ENCODE measurements at regions of chr20 and their contacts with region 1.

Region 1: DNA sequence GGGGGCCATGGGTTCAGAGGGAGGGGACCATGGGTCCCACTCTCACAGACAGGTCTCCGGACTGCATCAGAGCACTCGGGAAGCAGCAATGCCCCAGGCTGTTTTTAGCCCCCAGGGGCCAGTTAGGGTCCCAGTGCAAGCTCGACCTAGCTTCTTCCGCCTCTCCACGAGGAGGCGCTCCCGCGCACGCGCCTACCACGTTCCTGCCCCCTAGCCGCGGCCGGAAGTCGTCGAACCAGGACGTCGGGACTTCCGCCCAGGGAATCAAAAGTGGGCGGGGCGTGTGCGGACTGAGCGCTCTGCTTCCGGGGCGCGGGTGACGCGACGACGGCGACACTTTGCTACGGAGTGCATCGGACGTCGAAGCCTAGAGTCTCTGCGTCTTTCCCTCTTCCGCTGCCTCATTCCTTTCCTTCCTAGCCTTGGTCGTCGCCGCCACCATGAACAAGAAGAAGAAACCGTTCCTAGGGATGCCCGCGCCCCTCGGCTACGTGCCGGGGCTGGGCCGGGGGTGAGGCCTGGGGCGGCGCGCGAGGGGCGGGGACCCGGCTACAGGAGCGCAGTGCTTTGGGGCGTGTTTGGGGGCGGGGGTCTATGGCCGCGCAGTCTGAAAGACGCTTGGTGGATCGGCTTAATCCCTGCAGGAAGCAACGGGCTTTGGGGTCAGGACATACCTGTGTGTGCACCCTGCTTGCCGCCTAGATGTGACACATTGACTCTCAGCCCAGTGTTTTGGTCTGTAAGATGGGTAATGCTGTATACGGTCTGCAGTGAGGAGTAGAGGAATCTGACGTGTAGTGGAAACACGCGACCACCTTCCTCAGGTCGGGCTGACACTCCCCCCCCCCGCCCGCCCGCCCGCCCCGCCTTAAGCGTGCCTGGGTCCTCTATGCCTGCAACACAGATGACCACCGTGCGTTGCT is at the start of gene PRPF6:
- DNase-seq: peak; percentile 98
- ATAC-seq: peak; percentile 47
- H3K4me3 Mint-ChIP-seq: peak within 1 kb of the TSS; percentile 97
- H3K27ac Mint-ChIP-seq: peak within 1 kb of the TSS; percentile 98
- H3K4me1 Mint-ChIP-seq: peaks cover 59% of the 10 kb centered on the region
- H3K27me3 Mint-ChIP-seq: no peaks in the 10 kb centered on the region
- total RNA-seq, gene PRPF6: 60.5 to 67.0 TPM

Region 2: GRCh38 chr20:62907384-62908317 is 1073.4 kb before region 1 on chr20:
- CTCF ChIA-PET with region 1: no interaction called
- POLR2A ChIA-PET with region 1: no interaction called
- intact Hi-C with region 1: no loop called
- DNase-seq: peak; percentile 62
- ATAC-seq: peak; percentile 76
- H3K4me3 Mint-ChIP-seq: no peak overlapping the region
- H3K27ac Mint-ChIP-seq: peak overlapping the region; percentile 58
- H3K4me1 Mint-ChIP-seq: peaks cover 11% of the 10 kb centered on the region
- H3K27me3 Mint-ChIP-seq: no peaks in the 10 kb centered on the region

Region 3: DNA sequence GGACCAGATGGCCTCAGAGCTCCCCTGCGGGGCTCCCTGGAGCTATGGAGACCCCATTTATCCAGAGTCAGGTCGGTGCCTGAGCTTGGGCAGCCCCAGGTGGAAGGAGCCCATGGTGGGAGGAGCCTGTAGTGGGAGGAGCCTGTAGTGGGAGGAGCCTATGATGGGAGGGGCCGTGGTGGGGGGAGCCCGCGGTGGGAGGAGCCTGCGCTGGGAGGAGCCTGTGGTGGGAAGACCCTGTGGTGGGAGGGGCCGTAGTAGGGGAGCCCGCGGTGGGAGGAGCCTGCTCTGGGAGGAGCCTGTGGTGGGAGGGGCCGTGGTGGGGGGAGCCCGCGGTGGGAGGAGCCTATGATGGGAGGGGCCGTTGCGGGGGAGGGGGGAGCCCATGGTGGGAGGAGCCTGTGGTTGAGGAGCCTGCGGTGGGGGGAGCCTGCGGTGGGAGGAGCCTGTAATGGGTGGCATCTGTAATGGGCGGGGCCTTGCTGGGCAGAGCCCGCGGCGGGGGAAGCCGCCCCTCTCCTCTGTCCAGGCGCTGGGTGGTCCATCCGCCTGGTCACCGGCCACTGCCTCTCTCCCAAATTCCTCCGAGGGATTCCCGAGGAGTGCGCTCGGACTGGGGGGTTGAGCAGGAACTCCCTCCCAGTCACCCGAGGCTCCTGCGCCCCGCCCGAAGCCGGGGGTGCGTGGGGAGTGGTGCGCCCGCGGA is 427.7 kb before region 1 on chr20:
- CTCF ChIA-PET with region 1: no interaction called
- POLR2A ChIA-PET with region 1: no interaction called
- intact Hi-C with region 1: loop called in 1 of 2 experiments (anchors 1 kb)
- DNase-seq: peak; percentile 95
- ATAC-seq: peak; percentile 88
- H3K4me3 Mint-ChIP-seq: no peak overlapping the region
- H3K27ac Mint-ChIP-seq: peak overlapping the region; percentile 45
- H3K4me1 Mint-ChIP-seq: peaks cover 11% of the 10 kb centered on the region
- H3K27me3 Mint-ChIP-seq: no peaks in the 10 kb centered on the region

Region 4: GRCh38 chr20:63657937-63658748 is 322.9 kb before region 1 on chr20 and contains the start of gene RTEL1:
- CTCF ChIA-PET with region 1: no interaction called
- POLR2A ChIA-PET with region 1: no interaction called
- intact Hi-C with region 1: loop called in 1 of 2 experiments (anchors 1 kb)
- DNase-seq: peak; percentile 92
- ATAC-seq: peak; percentile 82
- H3K4me3 Mint-ChIP-seq: peak within 1 kb of the TSS; percentile 95
- H3K27ac Mint-ChIP-seq: peak within 1 kb of the TSS; percentile 94
- H3K4me1 Mint-ChIP-seq: peaks cover 30% of the 10 kb centered on the region
- H3K27me3 Mint-ChIP-seq: no peaks in the 10 kb centered on the region
- total RNA-seq, gene RTEL1: 44.5 to 44.7 TPM

Region 5: DNA sequence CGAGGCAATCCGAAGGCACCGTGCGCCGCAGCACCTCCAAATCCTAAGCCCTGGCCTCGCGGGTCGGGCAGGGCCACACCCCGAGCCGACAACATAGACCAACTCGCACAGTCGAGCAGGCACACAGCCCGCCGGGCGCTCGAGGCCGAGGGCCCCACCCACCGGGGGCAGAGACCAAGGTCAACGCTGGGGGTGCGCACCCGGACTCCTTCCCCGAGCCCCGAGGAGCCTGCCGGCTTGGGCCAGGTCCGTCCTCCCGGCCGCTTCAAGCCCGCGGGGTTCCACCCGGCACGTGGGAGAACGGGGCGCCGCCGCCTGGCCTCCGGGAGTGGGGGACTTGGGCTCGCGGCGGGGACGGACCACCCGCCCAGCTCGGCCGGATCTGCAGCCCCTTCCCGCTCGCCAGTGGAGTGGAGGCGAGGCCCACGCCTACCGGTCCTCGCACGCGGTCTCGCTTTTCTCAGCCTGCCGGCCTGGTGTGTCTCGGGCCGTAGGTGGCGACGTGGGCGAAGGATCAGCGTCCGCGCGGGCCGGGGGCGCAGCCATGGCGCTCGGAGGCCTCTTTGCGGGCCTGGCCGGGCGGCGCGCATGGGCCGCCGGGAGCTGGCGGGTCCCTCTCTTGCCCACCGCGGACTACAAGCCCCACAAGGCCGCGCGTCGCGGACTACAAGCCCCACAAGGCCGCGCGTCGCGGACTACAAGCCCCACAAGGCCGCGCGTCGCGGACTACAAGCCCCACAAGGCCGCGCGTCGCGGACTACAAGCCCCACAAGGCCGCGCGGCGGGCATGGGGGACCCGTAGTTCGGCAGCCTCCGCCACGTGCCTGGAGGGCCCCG is 25.0 kb before region 1 on chr20 and contains the start of gene UCKL1:
- CTCF ChIA-PET with region 1: interaction called, 5 read pairs
- POLR2A ChIA-PET with region 1: interaction called, 4 read pairs
- intact Hi-C with region 1: loop called (anchors 1 kb)
- DNase-seq: peak; percentile 95
- ATAC-seq: peak; percentile 78
- H3K4me3 Mint-ChIP-seq: peak within 1 kb of the TSS; percentile 77
- H3K27ac Mint-ChIP-seq: peak within 1 kb of the TSS; percentile 89
- H3K4me1 Mint-ChIP-seq: peaks cover 37% of the 10 kb centered on the region
- H3K27me3 Mint-ChIP-seq: no peaks in the 10 kb centered on the region
- total RNA-seq, gene UCKL1: 28.3 to 32.2 TPM

Region 6: GRCh38 chr20:64038565-64039292 is 57.7 kb after region 1 on chr20:
- CTCF ChIA-PET with region 1: interaction called, 32 read pairs
- POLR2A ChIA-PET with region 1: interaction called, 6 read pairs
- intact Hi-C with region 1: loop called (anchors 1 to 2 kb)
- DNase-seq: peak; percentile 89
- ATAC-seq: peak; percentile 70
- H3K4me3 Mint-ChIP-seq: peak overlapping the region; percentile 61
- H3K27ac Mint-ChIP-seq: no peak overlapping the region
- H3K4me1 Mint-ChIP-seq: peaks cover 48% of the 10 kb centered on the region
- H3K27me3 Mint-ChIP-seq: peaks cover 2% of the 10 kb centered on the region

Region 7: GRCh38 chr20:64119681-64120341 is 138.7 kb after region 1 on chr20:
- CTCF ChIA-PET with region 1: interaction called, 4 read pairs
- POLR2A ChIA-PET with region 1: no interaction called
- intact Hi-C with region 1: loop called (anchors 1 kb)
- DNase-seq: no peak
- ATAC-seq: peak; percentile 25
- H3K4me3 Mint-ChIP-seq: peak overlapping the region; percentile 41
- H3K27ac Mint-ChIP-seq: peak overlapping the region; percentile 66
- H3K4me1 Mint-ChIP-seq: peaks cover 10% of the 10 kb centered on the region
- H3K27me3 Mint-ChIP-seq: peaks cover 5% of the 10 kb centered on the region